Left colon (tissue), 2 donors: ENCODE measurements at regions of chr4 and their contacts with region 1.

Region 1: GRCh38 chr4:148445071-148445859 is 3.1 kb upstream of the NR3C2 start:
- DNase-seq: peak; percentile 75 to 79
- ATAC-seq: peak; percentile 41

Region 2: GRCh38 chr4:148288448-148288847 is 156.8 kb before region 1 on chr4:
- intact Hi-C with region 1: loop called in 1 of 2 experiments (anchors 5 kb)
- DNase-seq: peak in 1 of 2 donors; percentile 23
- ATAC-seq: peak; percentile 20

Region 3: DNA sequence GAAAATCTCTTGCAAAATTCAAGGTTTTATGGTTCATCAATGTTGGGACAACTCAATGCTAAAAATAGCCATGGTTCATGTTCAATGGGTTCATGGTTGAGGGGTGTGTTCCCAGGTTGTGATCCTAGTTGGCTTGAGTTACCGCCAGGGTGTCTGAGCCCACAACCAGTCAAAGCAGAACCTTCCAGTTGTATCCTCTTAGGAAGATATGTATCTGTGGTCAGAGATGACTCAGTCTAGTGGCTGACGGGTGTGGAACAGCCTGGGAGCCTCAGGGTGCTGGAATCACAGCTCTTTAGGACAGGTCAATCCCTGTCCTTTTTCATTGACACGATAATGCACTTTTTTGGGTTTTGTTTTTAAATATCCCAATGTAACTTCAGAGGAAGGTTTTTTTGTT is 189.2 kb after region 1 on chr4:
- intact Hi-C with region 1: no loop called
- DNase-seq: peak in 1 of 2 donors; percentile 30
- ATAC-seq: peak; percentile 70